ENCODE measurements at regions of chr20 and their contacts with region 1.

Region 1: GRCh38 chr20:37534401-37535157 is 6.9 kb upstream of the BLCAP start:
- DNase-seq: peak; percentile 75
- H3K4me3 ChIP-seq: no peak overlapping the region
- H3K27ac ChIP-seq: no peak overlapping the region
- H3K4me1 ChIP-seq: no peaks in the 10 kb centered on the region
- H3K27me3 ChIP-seq: no peaks in the 10 kb centered on the region
- CTCF ChIP-seq: peak; percentile 82 to 87

Region 2: DNA sequence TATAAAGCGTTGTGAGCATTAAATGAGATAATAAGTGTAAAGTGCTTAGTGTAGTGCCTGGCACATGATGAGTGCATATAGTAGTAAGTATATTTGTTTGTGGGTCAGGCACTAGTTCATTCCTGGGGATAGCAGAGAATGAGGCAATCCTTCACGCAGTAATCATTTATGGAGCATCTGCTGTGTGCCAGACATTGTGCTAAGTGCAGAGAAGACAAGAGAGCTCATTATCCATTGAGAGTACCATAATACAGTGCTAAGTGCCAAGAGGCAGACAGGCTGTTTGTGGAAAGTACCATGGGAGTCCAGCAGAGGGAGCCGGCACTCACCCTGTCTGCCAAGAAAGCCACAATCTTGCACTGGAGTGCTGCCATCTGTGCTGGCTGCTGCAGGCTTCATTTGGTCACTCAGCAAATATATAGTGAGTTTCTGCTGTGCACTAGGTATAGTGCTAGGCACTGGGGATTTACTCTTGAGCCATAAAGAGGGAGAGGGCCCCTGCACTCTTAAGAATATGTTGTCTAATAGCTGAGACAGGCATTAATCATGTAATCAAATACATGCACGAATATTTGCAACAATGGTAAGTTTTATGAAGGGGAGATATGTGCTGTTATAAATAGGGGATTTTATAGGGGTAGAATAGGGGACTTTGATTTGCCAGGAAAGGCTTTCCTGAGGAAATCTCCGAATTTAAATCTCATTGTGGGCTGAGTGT is 342.3 kb before region 1 on chr20:
- CTCF ChIA-PET with region 1: interaction called, 5 read pairs
- dilution Hi-C with region 1: no loop called
- in situ Hi-C with region 1: loop called (anchors 5 kb)
- intact Hi-C with region 1: loop called (anchors 1 kb)
- DNase-seq: peak; percentile 67
- H3K4me3 ChIP-seq: no peak overlapping the region
- H3K27ac ChIP-seq: no peak overlapping the region
- H3K4me1 ChIP-seq: peaks cover 3% of the 10 kb centered on the region
- H3K27me3 ChIP-seq: no peaks in the 10 kb centered on the region
- CTCF ChIP-seq: peak; percentile 89 to 93

Region 3: DNA sequence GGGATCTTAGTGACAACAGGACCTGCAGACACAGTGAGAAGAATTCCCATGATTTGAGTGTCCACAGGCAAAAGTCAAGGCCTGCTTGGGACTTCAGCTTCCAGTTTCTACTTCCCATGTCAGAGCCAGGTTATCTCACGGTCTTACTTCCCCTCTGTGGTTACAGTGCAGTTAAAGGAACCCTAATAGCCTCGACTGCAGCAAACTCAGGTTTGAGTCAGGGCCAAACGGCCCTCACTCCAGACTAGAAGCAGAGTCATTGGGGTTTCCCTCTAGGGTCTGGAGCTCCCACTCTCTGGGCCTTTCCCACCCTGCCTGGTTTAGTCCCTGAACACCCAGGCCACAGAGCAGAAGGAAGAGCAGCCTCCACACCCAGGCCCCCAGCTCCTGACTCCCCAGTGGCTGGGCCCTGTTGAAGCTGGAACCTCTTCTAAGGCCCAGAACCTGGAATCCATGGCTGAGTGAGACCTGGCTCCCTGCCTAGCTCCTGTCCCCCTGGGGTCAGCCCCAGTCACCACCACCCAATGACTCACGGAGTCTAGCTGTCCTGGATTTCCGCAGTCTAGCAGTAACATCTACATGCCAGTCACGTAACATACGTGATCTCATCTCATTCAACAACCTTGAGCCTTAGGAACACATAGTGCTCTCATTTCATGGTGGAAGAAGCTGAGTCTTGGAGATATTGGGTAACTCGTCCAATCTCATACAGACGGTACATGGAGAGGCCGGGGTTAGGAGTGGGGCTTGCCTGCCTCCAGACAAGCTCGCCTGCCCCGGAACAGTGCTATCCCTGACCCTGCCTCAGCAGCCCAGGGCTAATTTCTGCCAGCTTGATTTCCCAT is 263.8 kb before region 1 on chr20:
- CTCF ChIA-PET with region 1: no interaction called
- dilution Hi-C with region 1: no loop called
- in situ Hi-C with region 1: loop called (anchors 5 kb)
- intact Hi-C with region 1: loop called (anchors 1 kb)
- DNase-seq: no peak
- H3K4me3 ChIP-seq: no peak overlapping the region
- H3K27ac ChIP-seq: no peak overlapping the region
- H3K4me1 ChIP-seq: peaks cover 4% of the 10 kb centered on the region
- H3K27me3 ChIP-seq: no peaks in the 10 kb centered on the region
- CTCF ChIP-seq: no peak

Region 4: DNA sequence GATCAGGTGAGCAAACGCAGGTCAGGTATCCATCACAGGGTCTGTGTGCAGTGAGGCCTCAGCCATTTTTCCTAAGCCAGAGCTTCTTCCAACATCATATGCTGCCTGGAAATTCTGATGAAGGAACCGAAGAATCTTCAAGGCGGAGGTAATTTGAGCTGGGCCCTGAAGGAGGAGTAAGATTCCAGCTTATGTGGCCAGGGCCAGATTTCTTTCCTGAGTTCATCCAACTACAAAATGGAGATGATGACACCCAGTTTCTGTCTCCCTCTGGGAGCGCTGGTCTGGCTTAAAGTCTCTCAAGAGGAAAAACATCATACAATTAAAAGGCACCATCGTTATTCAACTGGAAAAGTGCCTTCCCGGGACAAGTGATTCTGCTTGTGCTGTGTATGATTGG is 252.0 kb before region 1 on chr20:
- CTCF ChIA-PET with region 1: interaction called, 5 read pairs
- dilution Hi-C with region 1: no loop called
- in situ Hi-C with region 1: loop called in 1 of 2 experiments (anchors 5 kb)
- intact Hi-C with region 1: loop called (anchors 1 kb)
- DNase-seq: peak; percentile 55
- H3K4me3 ChIP-seq: no peak overlapping the region
- H3K27ac ChIP-seq: no peak overlapping the region
- H3K4me1 ChIP-seq: peaks cover 7% of the 10 kb centered on the region
- H3K27me3 ChIP-seq: no peaks in the 10 kb centered on the region
- CTCF ChIP-seq: peak; percentile 62 to 80

Region 5: DNA sequence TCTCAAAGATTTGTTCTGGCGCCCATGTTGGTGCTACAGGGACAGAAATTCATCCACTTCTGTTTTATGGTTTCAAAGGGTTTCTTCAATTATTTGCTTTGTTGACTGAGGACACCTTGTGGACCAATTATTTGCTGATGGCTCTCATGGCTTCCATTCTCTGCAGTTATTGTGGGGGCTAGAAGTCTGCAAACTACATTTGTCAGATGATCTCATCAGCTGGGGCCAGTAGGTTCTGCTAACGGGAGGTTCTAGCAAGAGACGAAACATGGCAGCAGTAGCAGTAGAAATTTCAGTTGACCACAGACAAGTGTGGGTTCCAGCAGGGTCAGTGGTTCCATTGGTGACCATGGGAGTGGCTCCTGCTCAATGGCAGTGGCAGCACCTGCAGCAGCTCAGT is 65.9 kb after region 1 on chr20:
- CTCF ChIA-PET with region 1: no interaction called
- dilution Hi-C with region 1: no loop called
- in situ Hi-C with region 1: no loop called
- intact Hi-C with region 1: no loop called
- DNase-seq: no peak
- H3K4me3 ChIP-seq: no peak overlapping the region
- H3K27ac ChIP-seq: no peak overlapping the region
- H3K4me1 ChIP-seq: peaks cover 7% of the 10 kb centered on the region
- H3K27me3 ChIP-seq: peaks cover 5% of the 10 kb centered on the region
- CTCF ChIP-seq: no peak